ENCODE measurements at regions of chr13 and their contacts with region 1.

Region 1: DNA sequence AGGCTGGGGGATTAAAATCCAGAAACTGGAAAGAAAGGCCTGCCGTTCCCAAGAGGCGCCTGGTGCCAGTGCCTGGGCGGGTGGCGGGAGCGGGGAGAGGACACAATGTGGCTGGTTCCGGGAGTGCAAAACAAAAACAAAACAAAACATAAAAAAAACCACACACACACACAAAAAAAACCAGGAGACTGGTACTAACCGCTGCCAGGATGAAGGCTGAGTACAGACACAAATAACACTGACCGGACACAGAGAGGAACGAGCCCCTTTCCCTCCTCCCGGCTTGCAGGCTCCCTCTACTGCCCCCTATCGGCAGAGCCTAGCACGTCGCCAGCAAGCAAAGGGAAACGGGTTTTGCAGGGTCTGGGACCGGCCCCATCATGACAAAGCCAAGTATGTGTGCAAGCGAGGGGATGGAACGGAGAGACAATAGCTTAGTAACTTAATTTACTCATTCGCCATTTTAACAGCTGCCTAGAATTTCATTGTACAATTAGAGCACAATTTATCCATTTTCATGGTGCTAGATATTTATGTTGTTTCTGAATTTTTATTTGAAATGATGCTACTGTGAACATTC is 17.9 kb upstream of the ZDHHC20 start:
- DNase-seq: peak; percentile 73 to 88
- ATAC-seq: peak; percentile 65 to 74 (median 67)
- H3K4me3 ChIP-seq: peak overlapping the region; percentile 64
- H3K27ac ChIP-seq: no peak overlapping the region
- H3K4me1 ChIP-seq: peaks cover 7% of the 10 kb centered on the region
- H3K27me3 ChIP-seq: no peaks in the 10 kb centered on the region
- CTCF ChIP-seq: peak; percentile 94

Region 2: DNA sequence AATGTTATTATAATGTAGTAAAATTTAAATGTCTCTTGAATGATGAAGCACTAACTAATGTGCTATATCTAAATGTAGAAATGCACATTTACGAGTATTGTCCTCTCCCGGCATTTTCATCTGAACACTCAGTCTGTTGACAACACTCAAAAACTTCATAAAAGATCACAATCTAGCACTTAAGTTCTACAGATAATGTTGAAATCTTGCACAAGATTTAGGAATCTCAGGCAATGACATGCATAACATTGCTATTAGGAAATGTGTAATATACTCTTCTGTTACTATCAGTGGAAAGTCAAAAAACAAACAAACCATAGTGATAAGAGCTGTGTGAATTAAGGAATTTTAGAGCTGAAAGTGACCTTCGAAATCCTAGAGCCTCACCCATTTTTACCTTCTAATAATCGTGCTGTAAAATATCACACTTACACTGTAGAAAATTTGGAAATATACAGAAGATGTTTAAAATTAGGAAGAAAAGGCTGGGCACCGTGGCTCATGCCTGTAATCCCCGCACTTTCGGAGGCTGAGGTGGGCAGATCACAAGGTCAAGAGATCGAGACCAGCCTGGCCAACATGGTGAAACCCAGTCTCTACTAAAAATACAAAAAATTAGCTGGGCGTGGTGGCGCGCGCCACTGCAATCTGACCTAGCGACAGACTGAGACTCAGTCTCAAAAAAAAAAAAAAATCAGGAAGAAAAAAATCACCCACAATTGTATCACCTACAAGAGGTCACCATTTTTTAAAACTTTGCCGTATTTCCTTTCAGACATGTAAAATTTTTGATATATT is 536.7 kb before region 1 on chr13:
- intact Hi-C with region 1: loop called (anchors 5 kb)
- DNase-seq: no peak
- ATAC-seq: peak in 1 of 4 donors; percentile 17
- H3K4me3 ChIP-seq: no peak overlapping the region
- H3K27ac ChIP-seq: peak overlapping the region; percentile 78
- H3K4me1 ChIP-seq: peaks cover 14% of the 10 kb centered on the region
- H3K27me3 ChIP-seq: no peaks in the 10 kb centered on the region
- CTCF ChIP-seq: no peak

Region 3: DNA sequence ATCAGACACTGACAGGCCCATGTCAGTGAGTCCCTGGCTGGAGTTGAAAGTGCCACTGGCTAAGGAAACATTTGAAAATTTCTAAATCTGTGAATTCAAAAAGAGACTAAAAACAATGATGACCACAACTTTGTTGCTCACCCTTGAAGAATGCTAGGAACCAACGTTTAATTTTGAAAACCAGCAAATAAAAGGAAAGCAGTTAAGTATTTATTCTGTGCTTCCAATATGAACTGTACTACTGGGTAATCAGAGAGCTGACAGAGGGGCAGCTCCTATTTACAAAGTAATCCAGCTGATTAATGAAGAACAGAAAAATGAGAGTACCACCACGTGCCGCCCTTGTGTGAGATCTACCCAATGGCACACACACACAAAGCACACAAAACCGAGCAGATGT is 370.9 kb before region 1 on chr13:
- intact Hi-C with region 1: loop called (anchors 2 to 5 kb)
- DNase-seq: no peak
- ATAC-seq: no peak
- H3K4me3 ChIP-seq: no peak overlapping the region
- H3K27ac ChIP-seq: no peak overlapping the region
- H3K4me1 ChIP-seq: no peaks in the 10 kb centered on the region
- H3K27me3 ChIP-seq: no peaks in the 10 kb centered on the region
- CTCF ChIP-seq: no peak

Region 4: GRCh38 chr13:21111546-21111945 is 365.4 kb before region 1 on chr13:
- intact Hi-C with region 1: loop called (anchors 2 to 5 kb)
- DNase-seq: no peak
- ATAC-seq: no peak
- H3K4me3 ChIP-seq: no peak overlapping the region
- H3K27ac ChIP-seq: no peak overlapping the region
- H3K4me1 ChIP-seq: no peaks in the 10 kb centered on the region
- H3K27me3 ChIP-seq: no peaks in the 10 kb centered on the region
- CTCF ChIP-seq: no peak

Region 5: DNA sequence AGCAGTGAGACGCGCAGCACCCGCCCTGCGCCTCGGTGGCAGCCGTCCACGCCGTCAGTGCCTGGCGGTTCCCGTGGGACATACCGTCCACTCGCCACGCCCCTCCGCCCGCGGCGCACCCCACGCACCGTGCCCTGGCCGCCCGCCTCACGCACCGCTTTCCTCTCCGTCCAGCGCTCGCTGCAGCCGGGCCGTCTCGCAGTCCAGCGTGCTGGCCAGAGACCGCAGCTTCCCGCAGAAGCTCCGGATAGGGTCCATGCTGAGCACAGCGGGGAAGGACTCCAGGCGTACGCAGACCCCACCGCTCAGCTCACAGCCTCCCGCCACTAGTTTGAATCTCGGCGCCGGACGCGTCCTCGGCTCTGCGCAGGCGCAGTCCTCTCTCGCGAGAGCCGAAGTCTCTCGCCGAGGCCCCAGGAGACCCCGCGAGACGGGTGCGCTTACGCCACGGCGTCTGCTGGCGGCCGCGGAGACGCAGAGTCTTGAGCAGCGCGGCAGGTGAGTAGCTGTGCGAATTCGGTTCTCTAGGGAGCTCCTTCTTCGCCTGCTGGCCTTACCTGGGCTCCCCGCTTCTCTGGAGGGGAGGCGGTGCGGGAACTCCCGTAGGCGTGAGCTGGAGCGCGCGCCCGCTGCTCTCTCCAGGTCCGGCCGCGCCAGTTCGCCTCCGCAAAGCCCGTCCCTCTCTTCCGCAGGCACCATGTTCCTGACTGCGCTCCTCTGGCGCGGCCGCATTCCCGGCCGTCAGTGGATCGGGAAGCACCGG is 300.6 kb before region 1 on chr13 and contains the starts of genes MRPL57 and SKA3:
- intact Hi-C with region 1: loop called in 1 of 2 experiments (anchors 5 kb)
- DNase-seq: peak; percentile 92 to 96
- ATAC-seq: peak; percentile 99
- H3K4me3 ChIP-seq: peak within 1 kb of the TSS; percentile 100
- H3K27ac ChIP-seq: peak within 1 kb of the TSS; percentile 98
- H3K4me1 ChIP-seq: peaks cover 17% of the 10 kb centered on the region
- H3K27me3 ChIP-seq: no peaks in the 10 kb centered on the region
- CTCF ChIP-seq: no peak
- total RNA-seq, gene MRPL57: 17.6 to 30.7 (median 23.8) TPM
- total RNA-seq, gene SKA3: 0.14 to 1.5 (median 0.32) TPM

Region 6: DNA sequence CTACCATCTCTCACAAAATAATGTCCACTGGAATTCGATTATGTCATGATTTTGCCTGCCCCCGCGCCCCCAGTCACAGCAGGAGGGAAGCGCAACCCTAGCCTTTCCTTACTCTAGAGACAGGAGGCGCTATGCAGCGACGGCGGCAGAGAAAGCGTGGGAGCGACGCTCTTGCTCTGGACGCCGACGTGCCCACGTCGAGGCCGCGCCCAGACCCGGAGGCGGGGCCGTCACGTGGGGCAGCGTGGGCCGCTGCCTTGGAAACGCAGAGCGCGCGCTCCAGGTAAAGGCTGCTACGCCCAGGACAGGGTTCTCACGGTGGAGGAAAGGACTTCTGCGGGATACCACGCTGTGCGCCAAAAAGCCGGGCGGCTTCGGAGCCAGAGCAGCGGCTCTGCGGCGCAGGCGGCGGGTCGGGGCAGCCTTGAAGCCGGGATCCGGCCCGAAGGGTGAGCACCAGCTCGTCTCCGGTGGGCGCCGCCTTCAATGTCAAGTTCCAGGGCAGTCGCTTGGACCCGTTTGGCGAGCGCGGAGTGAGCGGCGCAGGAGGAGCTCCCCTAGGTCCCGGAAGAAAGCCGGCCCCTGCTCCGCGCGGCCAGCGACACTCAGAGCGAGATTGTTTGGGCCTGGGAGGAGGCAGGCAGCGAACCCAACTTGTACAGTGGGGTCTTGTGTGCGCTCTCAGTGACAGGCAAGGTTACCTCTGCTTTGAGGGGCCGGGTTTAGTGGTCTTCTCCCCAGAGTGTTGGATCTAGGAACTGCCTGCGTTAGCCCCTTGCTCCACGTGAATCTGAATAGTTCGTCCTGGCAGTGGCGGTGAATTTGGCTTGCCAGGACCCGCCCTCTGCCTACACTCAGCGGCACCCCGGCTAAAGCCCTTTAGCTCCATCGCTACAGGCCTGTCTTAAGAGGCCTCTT is 178.8 kb before region 1 on chr13:
- intact Hi-C with region 1: loop called (anchors 2 to 5 kb)
- DNase-seq: peak; percentile 84 to 89
- ATAC-seq: peak; percentile 99 to 100 (median 100)
- H3K4me3 ChIP-seq: peak overlapping the region; percentile 95
- H3K27ac ChIP-seq: peak overlapping the region; percentile 49
- H3K4me1 ChIP-seq: peaks cover 11% of the 10 kb centered on the region
- H3K27me3 ChIP-seq: no peaks in the 10 kb centered on the region
- CTCF ChIP-seq: peak; percentile 83

Region 7: DNA sequence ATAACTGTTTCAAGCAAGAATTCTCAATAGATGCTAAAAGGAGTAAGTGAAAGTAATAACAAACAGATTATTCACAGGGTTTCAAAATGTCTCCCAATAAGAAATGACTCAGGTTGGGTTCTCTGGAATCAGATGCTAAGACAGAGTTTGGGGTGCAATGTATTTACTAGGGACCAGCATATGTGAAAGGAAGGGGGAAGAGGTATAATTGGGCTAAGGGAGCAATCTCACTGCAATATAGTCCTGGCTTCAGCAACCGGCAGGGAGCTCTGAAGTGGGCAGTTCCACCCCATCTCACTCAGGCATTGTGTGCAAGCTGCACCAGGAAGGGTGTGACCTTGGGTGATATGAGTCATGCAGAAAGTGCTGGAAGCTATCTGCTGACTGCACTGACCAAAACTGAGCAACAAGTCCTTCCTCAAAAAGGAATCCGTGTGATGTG is 41.3 kb before region 1 on chr13:
- intact Hi-C with region 1: no loop called
- DNase-seq: peak in 1 of 2 donors; percentile 38
- ATAC-seq: peak; percentile 63 to 87 (median 82)
- H3K4me3 ChIP-seq: peak overlapping the region; percentile 12
- H3K27ac ChIP-seq: peak overlapping the region; percentile 53
- H3K4me1 ChIP-seq: peaks cover 10% of the 10 kb centered on the region
- H3K27me3 ChIP-seq: no peaks in the 10 kb centered on the region
- CTCF ChIP-seq: no peak

Region 8: DNA sequence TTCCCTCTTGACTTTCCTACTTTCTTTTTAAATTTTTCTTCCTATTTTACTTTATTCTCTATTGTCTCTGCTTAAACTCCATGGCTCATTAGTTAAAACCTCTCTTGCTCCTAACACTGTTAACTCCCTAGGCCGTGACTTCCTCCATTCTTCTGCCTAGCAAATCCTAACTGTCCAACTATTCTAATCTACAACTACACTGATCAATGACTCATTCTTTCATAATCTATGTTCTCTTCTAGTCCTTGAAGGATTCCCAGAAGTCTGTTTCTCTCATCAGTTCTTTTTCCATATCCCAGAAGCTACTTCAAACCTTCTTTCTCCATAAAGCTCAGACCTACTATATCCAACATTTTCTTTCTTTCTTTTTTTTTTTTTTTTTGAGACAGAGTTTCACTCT is 60.1 kb after region 1 on chr13:
- intact Hi-C with region 1: no loop called
- DNase-seq: no peak
- ATAC-seq: no peak
- H3K4me3 ChIP-seq: no peak overlapping the region
- H3K27ac ChIP-seq: no peak overlapping the region
- H3K4me1 ChIP-seq: peaks cover 1% of the 10 kb centered on the region
- H3K27me3 ChIP-seq: no peaks in the 10 kb centered on the region
- CTCF ChIP-seq: no peak

Region 9: DNA sequence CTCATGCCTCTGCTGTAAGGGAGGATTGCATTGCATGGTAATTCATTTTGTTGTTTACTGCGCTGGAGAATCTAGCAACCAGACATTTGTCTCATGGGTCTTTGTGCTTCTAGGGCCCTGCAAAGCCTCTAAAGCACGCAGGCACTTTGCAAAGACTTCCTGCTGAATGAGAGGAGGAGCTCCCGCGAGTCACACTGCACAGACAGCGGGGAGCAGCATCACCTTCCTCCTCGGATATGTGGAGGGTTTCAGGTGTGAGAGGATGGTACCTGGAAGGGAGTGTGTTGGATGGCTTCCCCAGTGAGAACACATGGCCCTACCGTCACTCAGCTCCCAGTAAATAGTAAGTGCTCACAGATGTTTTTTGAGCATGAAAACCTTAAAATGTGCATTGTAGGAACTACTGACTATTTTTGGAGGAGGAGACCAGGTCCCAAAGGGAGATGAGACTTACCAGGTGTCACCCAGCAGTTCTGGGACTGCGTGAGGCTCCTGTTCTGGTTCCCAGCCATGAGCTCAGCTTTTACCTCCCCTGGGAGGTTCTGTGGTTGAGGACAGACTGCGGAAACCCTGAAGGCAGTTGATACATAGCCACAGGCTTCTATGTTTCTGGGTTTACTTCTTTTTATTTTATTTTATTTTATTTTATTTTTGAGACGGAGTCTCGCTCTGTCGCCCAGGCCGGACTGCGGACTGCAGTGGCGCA is 471.9 kb after region 1 on chr13:
- intact Hi-C with region 1: no loop called
- DNase-seq: no peak
- ATAC-seq: no peak
- H3K4me3 ChIP-seq: no peak overlapping the region
- H3K27ac ChIP-seq: no peak overlapping the region
- H3K4me1 ChIP-seq: no peaks in the 10 kb centered on the region
- H3K27me3 ChIP-seq: no peaks in the 10 kb centered on the region
- CTCF ChIP-seq: no peak

Region 10: DNA sequence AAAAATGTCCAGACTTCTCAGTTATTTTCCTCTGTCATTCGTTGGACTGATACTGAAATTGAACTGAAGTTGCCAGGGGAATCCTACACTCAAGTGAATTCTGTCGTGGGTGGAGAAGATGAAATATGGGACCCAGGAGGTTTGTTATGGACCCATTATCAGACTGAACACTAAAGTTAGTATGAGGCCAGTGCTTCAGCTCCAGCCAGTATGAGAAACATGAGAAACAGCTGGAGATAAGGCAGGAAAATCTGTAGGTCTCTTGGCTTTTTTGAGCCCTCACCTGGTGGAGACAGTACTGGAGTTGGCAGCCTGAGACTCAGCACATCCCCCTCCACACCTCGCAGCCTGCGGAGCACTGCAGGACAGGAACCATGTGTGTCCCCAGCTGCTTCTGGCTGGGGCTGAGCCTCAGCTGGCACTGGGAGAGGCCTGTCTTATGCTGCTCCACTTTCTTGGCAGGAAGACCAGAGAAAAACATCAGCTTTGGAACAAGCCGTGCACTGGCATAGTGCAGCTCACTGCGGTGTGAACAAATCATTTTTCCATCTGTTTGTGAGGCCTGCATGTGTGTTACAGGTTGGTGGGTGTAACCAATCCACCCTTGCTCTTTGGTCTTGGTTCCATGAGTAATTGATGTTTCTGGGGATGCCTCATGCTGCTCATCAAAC is 834.9 kb after region 1 on chr13:
- intact Hi-C with region 1: no loop called
- DNase-seq: peak; percentile 26 to 55
- ATAC-seq: peak in 2 of 4 donors; percentile 50 to 62
- H3K4me3 ChIP-seq: no peak overlapping the region
- H3K27ac ChIP-seq: no peak overlapping the region
- H3K4me1 ChIP-seq: no peaks in the 10 kb centered on the region
- H3K27me3 ChIP-seq: no peaks in the 10 kb centered on the region
- CTCF ChIP-seq: no peak